ENCODE measurements at regions of chr11 and their contacts with region 1.

Region 1: GRCh38 chr11:65013692-65014145 is 241 bp upstream of the ARL2 start:
- DNase-seq: peak; percentile 92 to 96
- ATAC-seq: peak; percentile 90 to 96 (median 92)
- H3K4me3 ChIP-seq: peak overlapping the region; percentile 81
- H3K27ac ChIP-seq: peak overlapping the region; percentile 97
- H3K4me1 ChIP-seq: peaks cover 5% of the 10 kb centered on the region
- H3K27me3 ChIP-seq: no peaks in the 10 kb centered on the region
- CTCF ChIP-seq: no peak

Region 2: DNA sequence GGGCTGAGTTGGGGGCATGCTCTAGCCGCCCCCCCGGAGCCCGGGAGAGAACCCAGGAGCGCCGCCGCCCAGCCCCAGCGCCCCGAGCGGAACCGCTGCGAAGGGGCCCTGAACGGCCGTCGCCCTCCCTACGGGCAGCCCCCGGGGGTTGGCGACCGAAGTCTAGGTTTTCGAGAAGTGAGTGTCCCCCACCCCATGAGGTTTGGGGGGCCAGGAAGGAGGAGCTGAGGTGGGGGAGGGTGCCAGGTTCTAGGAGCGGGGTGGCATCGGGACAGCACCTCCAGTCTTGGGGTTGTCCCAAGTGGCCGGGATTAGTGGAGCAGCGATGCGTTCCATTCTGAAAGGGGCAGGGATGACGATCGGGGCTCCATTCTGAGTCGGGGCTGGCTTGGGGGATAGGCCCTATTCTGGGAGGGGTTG is 88.9 kb before region 1 on chr11:
- intact Hi-C with region 1: loop called in 1 of 2 experiments (anchors 5 kb)
- DNase-seq: peak in 1 of 2 donors; percentile 58
- ATAC-seq: peak in 2 of 4 donors; percentile 4 to 6
- H3K4me3 ChIP-seq: peak overlapping the region; percentile 99
- H3K27ac ChIP-seq: peak overlapping the region; percentile 97
- H3K4me1 ChIP-seq: peaks cover 17% of the 10 kb centered on the region
- H3K27me3 ChIP-seq: no peaks in the 10 kb centered on the region
- CTCF ChIP-seq: no peak

Region 3: GRCh38 chr11:65111744-65112414 is 98.2 kb after region 1 on chr11 and contains the start of gene TM7SF2:
- intact Hi-C with region 1: loop called in 1 of 2 experiments (anchors 5 kb)
- DNase-seq: peak; percentile 96 to 97
- ATAC-seq: peak; percentile 85 to 92 (median 90)
- H3K4me3 ChIP-seq: peak within 1 kb of the TSS; percentile 73
- H3K27ac ChIP-seq: peak within 1 kb of the TSS; percentile 68
- H3K4me1 ChIP-seq: peaks cover 31% of the 10 kb centered on the region
- H3K27me3 ChIP-seq: no peaks in the 10 kb centered on the region
- CTCF ChIP-seq: no peak
- total RNA-seq, gene TM7SF2: 5.1 to 13.5 (median 9.5) TPM

Region 4: GRCh38 chr11:65117216-65118096 is 103.7 kb after region 1 on chr11 and contains the start of gene ZNHIT2:
- intact Hi-C with region 1: loop called (anchors 1 to 5 kb)
- DNase-seq: peak; percentile 99 to 100
- ATAC-seq: peak; percentile 86 to 88 (median 87)
- H3K4me3 ChIP-seq: peak within 1 kb of the TSS; percentile 79
- H3K27ac ChIP-seq: peak within 1 kb of the TSS; percentile 81
- H3K4me1 ChIP-seq: peaks cover 28% of the 10 kb centered on the region
- H3K27me3 ChIP-seq: no peaks in the 10 kb centered on the region
- CTCF ChIP-seq: peak; percentile 93
- total RNA-seq, gene ZNHIT2: 8.6 to 16.1 (median 10.2) TPM

Region 5: GRCh38 chr11:65183191-65183891 is 169.6 kb after region 1 on chr11:
- intact Hi-C with region 1: no loop called
- DNase-seq: no peak
- ATAC-seq: no peak
- H3K4me3 ChIP-seq: no peak overlapping the region
- H3K27ac ChIP-seq: no peak overlapping the region
- H3K4me1 ChIP-seq: no peaks in the 10 kb centered on the region
- H3K27me3 ChIP-seq: no peaks in the 10 kb centered on the region
- CTCF ChIP-seq: no peak